Activated T-helper 2 cell treated with anti-CD3 and anti-CD28 coated beads, Interferon-gamma antibody, Interleukin-2, Interleukin-4, amounts not matched to agents 10 μg/mL and 5 μg/mL and 100 μg/mL, durations not matched to agents 14 hours and 24 hours and 36 hours (primary cell): ENCODE measurements at regions of chr5 and their contacts with region 1.

Region 1: GRCh38 chr5:163408311-163408923 is 29.0 kb upstream of the CCNG1 start:
- DNase-seq: peak; percentile 27
- H3K4me3 Mint-ChIP-seq: no peak overlapping the region
- H3K27ac Mint-ChIP-seq: no peak overlapping the region
- H3K4me1 Mint-ChIP-seq: peaks cover 2% of the 10 kb centered on the region
- H3K27me3 Mint-ChIP-seq: peaks cover 15% of the 10 kb centered on the region

Region 2: DNA sequence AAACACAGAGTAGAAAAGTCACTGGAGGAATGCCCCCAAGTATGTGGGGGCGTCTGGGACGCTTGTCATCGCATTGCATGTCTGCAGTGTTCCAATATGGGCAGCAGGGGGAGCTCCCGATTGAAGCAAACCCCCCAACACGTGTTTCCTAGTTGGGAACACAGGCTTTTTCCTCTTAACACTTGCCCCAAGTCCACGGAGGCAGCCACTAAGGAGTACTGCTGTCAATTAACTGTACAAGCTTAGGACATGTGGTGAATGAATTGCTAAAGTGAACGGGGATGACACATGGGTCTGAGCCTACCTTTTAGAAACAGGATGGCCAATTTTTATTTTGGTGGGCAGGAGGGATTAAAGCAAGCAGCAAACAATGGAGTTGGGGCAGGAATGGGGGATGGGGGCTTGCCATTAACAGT is 1864.1 kb before region 1 on chr5:
- intact Hi-C with region 1: loop called (anchors 2 kb)
- DNase-seq: no peak
- H3K4me3 Mint-ChIP-seq: no peak overlapping the region
- H3K27ac Mint-ChIP-seq: no peak overlapping the region
- H3K4me1 Mint-ChIP-seq: peaks cover 19% of the 10 kb centered on the region
- H3K27me3 Mint-ChIP-seq: peaks cover 44% of the 10 kb centered on the region

Region 3: GRCh38 chr5:163306421-163306820 is 102.0 kb before region 1 on chr5:
- intact Hi-C with region 1: loop called (anchors 5 kb)
- DNase-seq: no peak
- H3K4me3 Mint-ChIP-seq: no peak overlapping the region
- H3K27ac Mint-ChIP-seq: no peak overlapping the region
- H3K4me1 Mint-ChIP-seq: peaks cover 17% of the 10 kb centered on the region
- H3K27me3 Mint-ChIP-seq: peaks cover 13% of the 10 kb centered on the region

Region 4: DNA sequence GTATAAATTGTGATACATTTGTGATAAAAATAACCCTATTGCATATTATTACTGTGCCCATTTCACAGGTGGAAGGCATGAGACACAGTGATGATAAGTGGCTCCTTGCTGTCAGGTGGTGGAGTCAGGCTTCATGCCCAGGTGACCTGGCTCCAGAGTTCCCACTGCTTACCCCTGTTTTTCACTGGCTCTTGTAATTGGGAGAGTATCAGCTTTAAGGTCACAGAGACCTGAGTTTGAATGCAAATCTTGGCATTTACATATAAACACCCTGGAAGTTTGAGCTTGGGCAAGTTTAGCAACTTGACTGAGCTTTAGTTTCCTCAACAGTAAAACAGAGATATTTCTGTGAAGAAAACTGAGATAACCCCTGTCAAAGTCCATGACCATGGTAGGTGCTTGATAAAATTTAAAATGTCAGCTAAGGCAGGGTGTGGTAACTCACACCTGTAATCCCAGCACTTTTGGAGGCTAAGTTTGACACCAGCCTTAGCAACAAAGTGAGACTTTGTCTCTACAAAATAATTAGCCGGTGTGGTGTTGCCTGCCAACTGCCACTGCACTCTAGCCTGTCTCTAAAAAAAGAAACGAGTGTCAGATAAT is 126.2 kb after region 1 on chr5:
- intact Hi-C with region 1: no loop called
- DNase-seq: no peak
- H3K4me3 Mint-ChIP-seq: no peak overlapping the region
- H3K27ac Mint-ChIP-seq: no peak overlapping the region
- H3K4me1 Mint-ChIP-seq: no peaks in the 10 kb centered on the region
- H3K27me3 Mint-ChIP-seq: peaks cover 19% of the 10 kb centered on the region

Region 5: GRCh38 chr5:163730206-163730780 is 321.9 kb after region 1 on chr5:
- intact Hi-C with region 1: no loop called
- DNase-seq: no peak
- H3K4me3 Mint-ChIP-seq: no peak overlapping the region
- H3K27ac Mint-ChIP-seq: no peak overlapping the region
- H3K4me1 Mint-ChIP-seq: no peaks in the 10 kb centered on the region
- H3K27me3 Mint-ChIP-seq: no peaks in the 10 kb centered on the region